Activated CD8-positive, alpha-beta memory T cell treated with anti-CD3 and anti-CD28 coated beads, Interleukin-2, amount 10 ng/mL, durations not matched to agents 7 days and 5 days (primary cell): ENCODE measurements at regions of chr6 and their contacts with region 1.

Region 1: DNA sequence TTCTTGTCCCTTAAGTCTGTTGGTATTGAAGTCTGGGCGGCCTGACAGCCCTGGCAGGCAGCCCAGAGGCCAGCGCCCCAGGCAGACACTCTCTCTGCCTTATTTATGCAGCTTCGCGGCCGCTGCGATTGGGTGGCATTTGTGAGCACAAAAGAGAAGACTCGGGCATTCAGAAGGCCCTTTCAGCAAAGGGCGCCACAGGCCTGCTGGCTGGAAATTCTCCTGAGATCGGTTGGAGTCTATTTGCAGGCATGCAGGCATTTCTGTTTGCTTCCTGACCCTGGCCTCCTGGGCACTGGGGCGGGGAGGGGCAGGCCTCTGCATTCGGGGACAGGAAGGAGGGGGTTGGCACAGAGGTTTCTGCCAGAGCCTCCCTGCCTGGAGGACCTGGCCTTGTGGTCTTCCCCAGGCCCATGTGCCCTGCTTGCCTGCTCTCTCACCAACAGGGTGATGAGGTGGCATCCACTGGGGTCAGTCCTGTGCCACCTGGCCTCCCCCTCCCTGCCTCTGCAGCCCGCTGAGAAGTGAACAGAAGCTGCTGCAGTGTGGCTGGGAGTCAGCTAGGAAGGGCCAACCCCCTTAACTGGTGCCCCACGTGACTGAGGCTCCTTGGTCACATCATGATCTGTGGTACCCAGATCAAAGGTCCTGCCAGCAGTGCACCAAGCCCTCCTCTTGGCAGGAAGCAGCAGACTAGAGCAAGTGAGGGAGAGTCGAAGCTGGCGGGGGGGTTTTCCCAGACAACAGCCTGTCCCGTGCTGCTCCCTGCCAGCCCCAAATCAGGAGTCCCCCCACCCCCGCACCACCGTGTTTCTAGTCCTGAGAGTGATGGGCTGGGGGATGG is 16.6 kb upstream of the CCDC167 start:
- DNase-seq: peak; percentile 93
- ATAC-seq: peak; percentile 80
- H3K4me3 Mint-ChIP-seq: peak overlapping the region; percentile 66
- H3K27ac Mint-ChIP-seq: peak overlapping the region; percentile 90
- H3K4me1 Mint-ChIP-seq: peaks cover 60% of the 10 kb centered on the region
- H3K27me3 Mint-ChIP-seq: no peaks in the 10 kb centered on the region

Region 2: GRCh38 chr6:37499433-37500293 is 16.6 kb before region 1 on chr6 and contains the start of gene CCDC167:
- CTCF ChIA-PET with region 1: interaction called, 79 read pairs
- DNase-seq: peak; percentile 99
- ATAC-seq: peak; percentile 94
- H3K4me3 Mint-ChIP-seq: peak within 1 kb of the TSS; percentile 95
- H3K27ac Mint-ChIP-seq: peak within 1 kb of the TSS; percentile 97
- H3K4me1 Mint-ChIP-seq: peaks cover 82% of the 10 kb centered on the region
- H3K27me3 Mint-ChIP-seq: no peaks in the 10 kb centered on the region
- total RNA-seq, gene CCDC167: 73.8 to 83.4 TPM